Right ventricle myocardium inferior (tissue), 1 donor: ENCODE measurements at regions of chr1 and their contacts with region 1.

Region 1: DNA sequence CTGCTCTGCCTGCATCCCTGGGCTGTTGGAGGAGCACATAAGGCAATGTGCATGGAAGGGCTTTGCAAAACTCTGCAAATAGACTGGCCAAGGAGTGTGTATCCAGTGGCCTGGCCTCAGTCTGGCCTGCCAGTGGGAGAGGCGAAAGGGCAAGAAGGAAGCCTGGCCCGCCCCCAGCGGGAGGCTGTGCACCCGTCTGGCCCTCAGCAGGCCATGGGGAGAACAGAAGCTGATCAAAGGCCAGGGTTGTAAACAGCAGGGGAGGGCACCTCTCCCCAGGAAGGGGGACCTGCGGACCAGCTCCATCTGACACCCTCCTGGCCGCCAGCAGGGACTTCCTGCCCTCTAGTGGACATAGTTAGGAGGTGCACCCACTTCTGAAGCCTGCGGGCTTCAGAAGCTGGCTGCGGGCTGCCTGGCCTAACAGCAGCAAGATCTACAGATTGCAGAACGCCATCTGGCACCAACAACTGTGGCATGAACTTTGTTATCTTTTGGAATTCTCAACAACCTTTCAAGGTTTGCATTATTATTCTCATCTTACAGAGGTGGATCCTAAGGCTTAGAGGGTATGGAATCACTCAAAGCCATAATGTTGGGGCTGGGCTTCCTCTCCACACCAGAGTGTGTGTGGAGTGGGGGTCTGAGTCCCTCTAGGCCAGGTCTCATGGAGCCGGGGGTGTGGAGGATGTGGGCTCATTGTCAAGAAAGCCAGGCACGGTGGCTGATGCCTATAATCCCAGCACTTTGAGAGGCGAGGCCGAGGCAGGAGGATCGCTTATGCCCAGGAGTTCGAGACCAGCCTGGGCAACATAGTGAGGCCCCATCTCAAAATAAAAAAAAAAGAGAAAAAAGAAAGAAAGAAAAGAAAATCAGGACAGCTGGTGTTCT is 18.9 kb upstream of the CDK18 start:
- DNase-seq: no peak
- ATAC-seq: peak; percentile 81

Region 2: GRCh38 chr1:205354259-205354904 is 131.2 kb before region 1 on chr1:
- intact Hi-C with region 1: loop called (anchors 5 kb)
- DNase-seq: no peak
- ATAC-seq: no peak

Region 3: DNA sequence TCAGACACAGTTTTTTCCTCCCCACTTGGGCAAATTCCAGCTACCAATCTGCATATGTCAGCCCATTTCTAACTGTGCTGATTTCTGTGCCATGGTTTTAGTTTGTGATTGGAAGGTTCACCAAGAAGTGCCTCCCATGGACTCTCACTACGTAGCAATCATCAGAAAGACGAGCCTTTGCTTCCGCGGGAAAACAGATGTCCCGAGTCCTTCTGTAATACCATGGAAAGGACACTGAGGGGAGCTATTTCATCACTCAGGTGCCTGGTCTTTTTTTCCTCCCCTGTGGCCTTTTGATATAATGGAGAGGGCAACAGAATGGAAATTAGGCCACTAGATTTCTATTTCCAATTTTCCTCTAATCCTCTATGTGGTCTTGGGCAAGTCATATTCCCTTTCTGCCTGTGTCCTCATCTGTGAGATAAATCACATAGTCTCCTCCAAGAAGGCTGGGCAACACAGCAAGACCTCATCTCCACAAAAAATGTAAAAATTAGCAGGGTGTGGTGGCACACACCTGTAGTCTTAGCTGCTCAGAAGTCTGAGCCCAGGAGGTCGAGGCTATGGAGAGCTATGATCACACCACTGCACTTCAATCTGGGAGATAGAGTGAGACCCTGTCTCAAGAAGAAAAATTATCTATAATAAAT is 88.5 kb before region 1 on chr1:
- intact Hi-C with region 1: loop called (anchors 1 kb)
- DNase-seq: no peak
- ATAC-seq: peak; percentile 79

Region 4: GRCh38 chr1:205438213-205439157 is 47.1 kb before region 1 on chr1:
- intact Hi-C with region 1: loop called (anchors 5 kb)
- DNase-seq: peak; percentile 89
- ATAC-seq: peak; percentile 83

Region 5: GRCh38 chr1:205523891-205524793 is 38.6 kb after region 1 on chr1:
- intact Hi-C with region 1: loop called (anchors 1 kb)
- DNase-seq: peak; percentile 76
- ATAC-seq: peak; percentile 47

Region 6: DNA sequence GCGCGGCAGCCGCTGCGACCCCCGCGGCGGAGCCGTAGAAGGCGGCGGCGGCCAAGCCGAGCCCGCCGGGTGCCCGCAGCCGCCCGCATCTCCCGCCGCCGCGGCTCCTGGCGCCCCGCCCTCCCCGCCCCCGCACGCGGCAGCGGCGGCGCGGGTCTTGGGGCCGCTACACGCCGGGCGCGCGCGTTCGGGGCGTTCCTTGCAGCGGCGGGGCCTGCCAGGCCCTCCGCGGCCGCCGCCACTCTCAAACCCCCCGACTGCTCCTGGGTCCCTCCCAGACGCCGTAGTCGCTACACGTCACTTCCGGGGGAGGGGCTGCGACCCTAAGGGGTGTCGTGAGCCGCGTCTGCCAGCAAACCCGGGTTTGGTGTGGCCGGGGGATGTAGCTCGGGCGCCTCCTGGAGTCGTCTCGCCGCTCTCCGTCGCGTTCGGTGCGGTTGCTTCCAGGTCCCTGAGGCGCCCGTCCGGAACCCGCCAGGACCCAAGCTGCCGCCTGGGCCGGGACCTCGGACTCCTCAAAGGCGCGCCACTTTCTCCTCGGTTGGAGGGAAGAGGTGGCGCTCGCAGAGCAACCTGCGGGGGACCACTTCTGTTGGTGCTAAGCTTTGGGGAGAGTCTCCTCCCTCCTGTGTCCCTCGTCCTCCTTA is 146.3 kb after region 1 on chr1 and contains the start of gene ELK4:
- intact Hi-C with region 1: loop called (anchors 5 kb)
- DNase-seq: peak; percentile 99
- ATAC-seq: peak; percentile 99
- total RNA-seq, gene ELK4: 35.5 TPM